Activated CD8-positive, alpha-beta T cell treated with anti-CD3 and anti-CD28 coated beads, Interleukin-2, amount 10 ng/mL, durations not matched to agents 7 days and 5 days (primary cell): ENCODE measurements at regions of chr1 and their contacts with region 1.

Region 1: GRCh38 chr1:160726498-160727315 is 12.3 kb upstream of the SLAMF7 start:
- DNase-seq: peak; percentile 82
- ATAC-seq: peak; percentile 80
- H3K4me3 Mint-ChIP-seq: no peak overlapping the region
- H3K27ac Mint-ChIP-seq: no peak overlapping the region
- H3K4me1 Mint-ChIP-seq: peaks cover 25% of the 10 kb centered on the region
- H3K27me3 Mint-ChIP-seq: no peaks in the 10 kb centered on the region

Region 2: GRCh38 chr1:160675641-160676410 is 50.9 kb before region 1 on chr1:
- CTCF ChIA-PET with region 1: interaction called, 184 read pairs
- POLR2A ChIA-PET with region 1: interaction called, 3 read pairs
- DNase-seq: peak; percentile 86
- ATAC-seq: peak; percentile 79
- H3K4me3 Mint-ChIP-seq: no peak overlapping the region
- H3K27ac Mint-ChIP-seq: peak overlapping the region; percentile 80
- H3K4me1 Mint-ChIP-seq: peaks cover 44% of the 10 kb centered on the region
- H3K27me3 Mint-ChIP-seq: no peaks in the 10 kb centered on the region

Region 3: DNA sequence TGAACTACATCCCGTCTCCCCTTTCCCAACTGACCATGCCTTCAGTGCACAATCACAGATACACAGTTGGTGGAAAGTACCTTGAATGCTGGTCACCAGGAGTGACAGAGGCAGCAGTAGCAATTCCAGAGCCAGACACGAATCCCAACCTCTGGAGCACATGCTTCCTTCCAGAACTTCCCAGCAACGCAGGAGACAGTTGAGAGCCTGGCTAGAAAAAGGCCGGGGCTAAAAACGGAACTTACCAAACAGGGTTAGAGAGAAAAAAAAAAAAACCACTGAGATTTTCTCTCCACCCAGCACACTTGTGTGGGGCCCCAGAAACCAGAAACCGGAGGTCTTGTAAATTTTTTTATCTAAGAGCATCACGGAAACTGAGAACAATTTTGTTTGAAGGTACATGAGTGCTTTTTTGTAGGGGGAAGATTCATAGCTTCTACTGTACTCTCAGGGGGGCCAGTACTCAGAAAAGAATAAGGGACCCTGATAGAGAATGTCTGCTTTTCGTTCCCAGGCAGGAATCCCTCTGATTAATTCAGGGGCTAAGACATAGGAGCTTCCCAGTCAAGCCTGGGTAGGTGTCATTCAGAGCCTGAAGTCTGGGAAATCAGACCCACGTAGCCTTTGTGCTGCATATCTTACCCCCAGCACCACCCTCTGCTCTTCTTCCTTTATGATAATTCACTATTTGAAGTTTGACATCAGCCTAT is 14.9 kb before region 1 on chr1 and contains the start of gene CD48:
- CTCF ChIA-PET with region 1: interaction called, 147 read pairs
- POLR2A ChIA-PET with region 1: interaction called, 44 read pairs
- DNase-seq: peak; percentile 79
- ATAC-seq: peak; percentile 48
- H3K4me3 Mint-ChIP-seq: no peak within 1 kb of the TSS
- H3K27ac Mint-ChIP-seq: no peak within 1 kb of the TSS
- H3K4me1 Mint-ChIP-seq: peaks cover 39% of the 10 kb centered on the region
- H3K27me3 Mint-ChIP-seq: no peaks in the 10 kb centered on the region
- total RNA-seq, gene CD48: 325 to 327 TPM

Region 4: GRCh38 chr1:160748181-160748877 is 21.6 kb after region 1 on chr1:
- CTCF ChIA-PET with region 1: interaction called, 27 read pairs
- POLR2A ChIA-PET with region 1: interaction called, 3 read pairs
- DNase-seq: no peak
- ATAC-seq: no peak
- H3K4me3 Mint-ChIP-seq: no peak overlapping the region
- H3K27ac Mint-ChIP-seq: peak overlapping the region; percentile 40
- H3K4me1 Mint-ChIP-seq: peaks cover 96% of the 10 kb centered on the region
- H3K27me3 Mint-ChIP-seq: no peaks in the 10 kb centered on the region

Region 5: DNA sequence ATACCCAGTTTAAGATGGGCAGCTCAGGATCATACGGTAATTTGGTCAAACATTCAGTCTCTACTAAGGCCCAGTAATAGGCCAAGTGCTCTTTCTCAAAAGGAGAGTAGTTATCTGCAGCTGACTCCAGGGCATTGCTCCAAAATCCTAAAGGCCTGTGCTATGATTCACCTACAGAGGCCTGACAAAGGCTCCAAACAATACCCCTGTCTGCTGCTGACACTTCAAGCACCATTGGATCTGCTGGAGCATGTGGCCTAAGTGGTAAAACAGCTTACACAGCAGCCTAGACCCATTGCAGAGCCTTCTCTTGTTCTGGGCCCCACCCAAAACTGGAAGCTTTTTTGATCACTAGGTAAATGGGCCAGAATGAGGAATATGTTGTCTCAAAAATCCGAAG is 35.2 kb after region 1 on chr1:
- CTCF ChIA-PET with region 1: interaction called, 439 read pairs
- POLR2A ChIA-PET with region 1: interaction called, 4 read pairs
- DNase-seq: no peak
- ATAC-seq: no peak
- H3K4me3 Mint-ChIP-seq: no peak overlapping the region
- H3K27ac Mint-ChIP-seq: no peak overlapping the region
- H3K4me1 Mint-ChIP-seq: peaks cover 32% of the 10 kb centered on the region
- H3K27me3 Mint-ChIP-seq: no peaks in the 10 kb centered on the region

Region 6: GRCh38 chr1:160777486-160778089 is 50.9 kb after region 1 on chr1:
- CTCF ChIA-PET with region 1: interaction called, 95 read pairs
- POLR2A ChIA-PET with region 1: no interaction called
- DNase-seq: peak; percentile 66
- ATAC-seq: peak; percentile 76
- H3K4me3 Mint-ChIP-seq: no peak overlapping the region
- H3K27ac Mint-ChIP-seq: peak overlapping the region; percentile 26
- H3K4me1 Mint-ChIP-seq: peaks cover 40% of the 10 kb centered on the region
- H3K27me3 Mint-ChIP-seq: no peaks in the 10 kb centered on the region

Region 7: GRCh38 chr1:160830321-160831153 is 103.8 kb after region 1 on chr1:
- CTCF ChIA-PET with region 1: interaction called, 99 read pairs
- POLR2A ChIA-PET with region 1: no interaction called
- DNase-seq: peak; percentile 87
- ATAC-seq: peak; percentile 83
- H3K4me3 Mint-ChIP-seq: no peak overlapping the region
- H3K27ac Mint-ChIP-seq: no peak overlapping the region
- H3K4me1 Mint-ChIP-seq: peaks cover 40% of the 10 kb centered on the region
- H3K27me3 Mint-ChIP-seq: no peaks in the 10 kb centered on the region